K562 (cell line): ENCODE measurements at regions of chrX and their contacts with region 1.

Region 1: GRCh38 chrX:68196939-68197791 is 236.1 kb downstream of the OPHN1 start:
- DNase-seq: peak; percentile 49 to 63 (median 58)
- ATAC-seq: peak; percentile 83
- H3K4me3 ChIP-seq: no peak overlapping the region
- H3K27ac ChIP-seq: no peak overlapping the region
- H3K4me1 ChIP-seq: no peaks in the 10 kb centered on the region
- H3K27me3 ChIP-seq: no peaks in the 10 kb centered on the region
- CTCF ChIP-seq: peak; percentile 64 to 76 (median 70)
- EP300 ChIP-seq: no peak
- POLR2A ChIP-seq: no peak
- RAD21 ChIP-seq: peak; percentile 76 to 88

Region 2: GRCh38 chrX:68462653-68463052 is 265.5 kb after region 1 on chrX:
- CTCF ChIA-PET with region 1: interaction called, 4 read pairs
- POLR2A ChIA-PET with region 1: no interaction called
- in situ Hi-C with region 1: loop called (anchors 5 kb)
- intact Hi-C with region 1: loop called (anchors 5 kb)
- DNase-seq: peak in 3 of 4 experiments; percentile 8 to 67 (median 10)
- ATAC-seq: peak; percentile 92
- H3K4me3 ChIP-seq: no peak overlapping the region
- H3K27ac ChIP-seq: peak overlapping the region; percentile 47; the same call in 2 of the 3 replicates
- H3K4me1 ChIP-seq: no peaks in the 10 kb centered on the region
- H3K27me3 ChIP-seq: no peaks in the 10 kb centered on the region; a peak in 1 of 5 replicates
- CTCF ChIP-seq: peak; percentile 59 to 73 (median 71)
- EP300 ChIP-seq: no peak
- POLR2A ChIP-seq: no peak
- RAD21 ChIP-seq: peak; percentile 70 to 87

Region 3: GRCh38 chrX:68710870-68711576 is 513.9 kb after region 1 on chrX:
- CTCF ChIA-PET with region 1: no interaction called
- POLR2A ChIA-PET with region 1: interaction called, 3 read pairs
- in situ Hi-C with region 1: no loop called
- intact Hi-C with region 1: loop called (anchors 2 kb)
- DNase-seq: peak; percentile 41 to 55 (median 42)
- ATAC-seq: peak; percentile 88
- H3K4me3 ChIP-seq: no peak overlapping the region
- H3K27ac ChIP-seq: no peak overlapping the region; the same call in 2 of the 3 replicates
- H3K4me1 ChIP-seq: no peaks in the 10 kb centered on the region; a peak in 2 of 5 replicates
- H3K27me3 ChIP-seq: no peaks in the 10 kb centered on the region
- CTCF ChIP-seq: peak; percentile 48 to 66 (median 58)
- EP300 ChIP-seq: no peak
- POLR2A ChIP-seq: no peak
- RAD21 ChIP-seq: peak; percentile 37 to 67

Region 4: GRCh38 chrX:68822641-68823410 is 625.7 kb after region 1 on chrX:
- CTCF ChIA-PET with region 1: no interaction called
- POLR2A ChIA-PET with region 1: no interaction called
- in situ Hi-C with region 1: loop called (anchors 25 kb)
- intact Hi-C with region 1: no loop called
- DNase-seq: peak; percentile 32 to 46 (median 41)
- ATAC-seq: peak; percentile 96
- H3K4me3 ChIP-seq: no peak overlapping the region
- H3K27ac ChIP-seq: no peak overlapping the region
- H3K4me1 ChIP-seq: no peaks in the 10 kb centered on the region; a peak in 1 of 5 replicates
- H3K27me3 ChIP-seq: no peaks in the 10 kb centered on the region
- CTCF ChIP-seq: peak; percentile 59 to 73 (median 60)
- EP300 ChIP-seq: no peak
- POLR2A ChIP-seq: no peak
- RAD21 ChIP-seq: peak; percentile 59 to 74; a peak in 3 of 4 replicates